ENCODE measurements at regions of chr13 and their contacts with region 1.

Region 1: GRCh38 chr13:113252516-113253095 is 43.2 kb downstream of the CUL4A start:
- DNase-seq: no peak
- H3K4me3 ChIP-seq: no peak overlapping the region
- CTCF ChIP-seq: no peak
- POLR2A ChIP-seq: no peak

Region 2: GRCh38 chr13:113231306-113232207 is 21.0 kb before region 1 on chr13:
- intact Hi-C with region 1: loop called (anchors 1 kb)
- DNase-seq: no peak
- H3K4me3 ChIP-seq: no peak overlapping the region
- CTCF ChIP-seq: no peak
- POLR2A ChIP-seq: no peak

Measured in lower leg skin (tissue), 4 donors.